Caco-2 (cell line): ENCODE measurements at regions of chr7 and their contacts with region 1.

Region 1: GRCh38 chr7:4479367-4480039 is 202.6 kb upstream of the FOXK1 start:
- DNase-seq: peak; percentile 69 to 76
- H3K4me3 ChIP-seq: no peak overlapping the region
- H3K4me3 Mint-ChIP-seq: no peak overlapping the region
- H3K27ac Mint-ChIP-seq: no peak overlapping the region
- H3K4me1 ChIP-seq: no peaks in the 10 kb centered on the region
- H3K4me1 Mint-ChIP-seq: peaks cover 7% of the 10 kb centered on the region
- H3K27me3 ChIP-seq: no peaks in the 10 kb centered on the region
- H3K27me3 Mint-ChIP-seq: no peaks in the 10 kb centered on the region
- CTCF ChIP-seq: peak; percentile 59 to 65

Region 2: GRCh38 chr7:3922175-3922635 is 557.3 kb before region 1 on chr7:
- CTCF ChIA-PET with region 1: no interaction called
- POLR2A ChIA-PET with region 1: no interaction called
- intact Hi-C with region 1: loop called (anchors 2 kb)
- DNase-seq: peak; percentile 55 to 69
- H3K4me3 ChIP-seq: no peak overlapping the region
- H3K4me3 Mint-ChIP-seq: no peak overlapping the region
- H3K27ac Mint-ChIP-seq: peak overlapping the region; percentile 60
- H3K4me1 ChIP-seq: no peaks in the 10 kb centered on the region
- H3K4me1 Mint-ChIP-seq: no peaks in the 10 kb centered on the region
- H3K27me3 ChIP-seq: no peaks in the 10 kb centered on the region
- H3K27me3 Mint-ChIP-seq: no peaks in the 10 kb centered on the region
- CTCF ChIP-seq: peak in 1 of 2 experiments; percentile 27

Region 3: DNA sequence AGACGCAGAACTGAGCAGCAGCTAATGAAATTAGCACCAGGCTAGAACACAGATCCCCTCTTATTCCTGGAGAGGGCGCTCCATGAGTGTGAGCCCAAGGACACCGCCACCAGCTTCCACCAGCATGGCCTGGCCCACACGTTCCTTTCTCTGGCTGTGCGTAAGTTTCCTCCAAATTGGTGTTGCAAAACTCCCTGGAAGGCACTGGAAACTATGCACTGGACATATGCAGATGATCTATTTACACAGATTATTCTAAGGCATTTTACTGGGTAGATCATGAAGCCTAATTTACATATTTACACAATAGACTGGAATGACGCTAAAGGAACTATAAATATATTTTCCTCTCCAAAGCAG is 253.0 kb before region 1 on chr7:
- CTCF ChIA-PET with region 1: no interaction called
- POLR2A ChIA-PET with region 1: no interaction called
- intact Hi-C with region 1: loop called (anchors 1 kb)
- DNase-seq: no peak
- H3K4me3 ChIP-seq: no peak overlapping the region
- H3K4me3 Mint-ChIP-seq: no peak overlapping the region
- H3K27ac Mint-ChIP-seq: no peak overlapping the region
- H3K4me1 ChIP-seq: no peaks in the 10 kb centered on the region
- H3K4me1 Mint-ChIP-seq: no peaks in the 10 kb centered on the region
- H3K27me3 ChIP-seq: no peaks in the 10 kb centered on the region
- H3K27me3 Mint-ChIP-seq: no peaks in the 10 kb centered on the region
- CTCF ChIP-seq: no peak

Region 4: GRCh38 chr7:4383584-4383983 is 95.9 kb before region 1 on chr7:
- CTCF ChIA-PET with region 1: no interaction called
- POLR2A ChIA-PET with region 1: no interaction called
- intact Hi-C with region 1: loop called (anchors 10 kb)
- DNase-seq: no peak
- H3K4me3 ChIP-seq: no peak overlapping the region
- H3K4me3 Mint-ChIP-seq: no peak overlapping the region
- H3K27ac Mint-ChIP-seq: no peak overlapping the region
- H3K4me1 ChIP-seq: no peaks in the 10 kb centered on the region
- H3K4me1 Mint-ChIP-seq: no peaks in the 10 kb centered on the region
- H3K27me3 ChIP-seq: no peaks in the 10 kb centered on the region
- H3K27me3 Mint-ChIP-seq: peaks cover 3% of the 10 kb centered on the region
- CTCF ChIP-seq: no peak

Region 5: GRCh38 chr7:4436361-4436895 is 43.1 kb before region 1 on chr7:
- CTCF ChIA-PET with region 1: interaction called, 3 read pairs
- POLR2A ChIA-PET with region 1: no interaction called
- intact Hi-C with region 1: loop called (anchors 1 kb)
- DNase-seq: peak; percentile 66 to 75
- H3K4me3 ChIP-seq: no peak overlapping the region
- H3K4me3 Mint-ChIP-seq: peak overlapping the region; percentile 72
- H3K27ac Mint-ChIP-seq: peak overlapping the region; percentile 96
- H3K4me1 ChIP-seq: peaks cover 43% of the 10 kb centered on the region
- H3K4me1 Mint-ChIP-seq: peaks cover 41% of the 10 kb centered on the region
- H3K27me3 ChIP-seq: no peaks in the 10 kb centered on the region
- H3K27me3 Mint-ChIP-seq: no peaks in the 10 kb centered on the region
- CTCF ChIP-seq: no peak